GM18951 (cell line): ENCODE measurements at regions of chr3 and their contacts with region 1.

Region 1: DNA sequence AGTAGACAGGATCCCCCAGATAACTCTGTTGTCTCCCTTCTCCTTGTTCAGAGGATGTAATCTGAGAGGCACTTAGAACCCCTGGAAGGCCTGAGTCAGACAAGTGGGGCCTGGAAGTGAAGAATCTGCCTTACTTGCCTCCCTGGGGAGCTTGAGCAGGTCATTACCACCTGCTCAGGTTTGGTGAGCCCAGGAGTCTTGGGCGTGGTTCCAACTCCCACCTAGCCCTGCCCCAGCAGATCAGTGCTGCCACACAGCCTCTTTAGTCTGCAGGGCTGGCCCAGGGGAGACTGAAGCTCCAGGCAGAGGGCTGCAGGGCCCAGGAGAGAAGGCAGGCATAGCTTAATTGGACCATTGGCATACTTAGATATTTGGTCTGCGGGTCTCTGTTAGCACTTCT is 230.0 kb downstream of the ERC2 start:
- POLR2A ChIP-seq: no peak

Region 2: DNA sequence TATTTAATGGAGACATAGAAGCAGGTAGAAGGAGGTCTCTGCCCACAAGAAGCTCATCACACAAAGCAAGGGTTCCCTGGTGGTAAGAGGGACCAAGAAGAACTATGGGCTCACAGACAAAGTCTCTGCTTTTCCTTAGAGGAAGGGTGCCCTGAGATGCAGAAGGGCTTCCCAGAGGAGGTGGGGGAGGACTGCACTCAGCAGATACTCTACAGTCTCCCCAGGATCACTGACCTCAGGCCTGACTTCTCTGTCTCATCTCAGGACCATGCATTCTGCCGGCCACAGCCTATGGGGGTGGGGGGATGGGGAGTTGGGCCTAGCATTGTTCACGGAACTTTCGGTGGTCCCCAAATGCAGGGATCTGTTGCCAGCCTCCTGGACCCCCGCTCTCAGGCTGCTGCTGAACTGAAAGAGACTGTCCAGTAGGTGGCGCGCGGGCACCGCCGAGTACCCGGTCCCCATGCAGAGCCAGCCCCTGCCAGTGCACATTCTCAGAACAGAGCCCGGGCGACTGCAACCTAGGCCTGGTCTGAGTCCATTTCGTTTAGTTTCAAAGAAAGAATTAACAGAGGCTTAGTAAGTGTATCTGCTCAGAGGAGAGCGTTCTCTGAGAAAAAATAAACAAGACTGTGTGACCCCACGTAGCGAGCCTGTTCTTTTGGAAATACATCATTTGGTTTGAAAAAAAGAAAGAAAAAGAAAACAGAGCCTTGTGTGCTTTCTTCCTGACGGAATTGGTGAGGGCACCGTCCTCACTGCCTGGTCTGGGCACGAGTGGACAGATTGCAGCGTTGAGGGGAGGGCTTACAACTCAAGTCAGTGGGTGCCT is 1384.5 kb before region 1 on chr3:
- in situ Hi-C with region 1: loop called (anchors 25 kb)
- POLR2A ChIP-seq: no peak

Region 3: GRCh38 chr3:56189536-56189935 is 48.8 kb before region 1 on chr3:
- in situ Hi-C with region 1: loop called (anchors 10 kb)
- POLR2A ChIP-seq: no peak